ENCODE measurements at regions of chr11 and their contacts with region 1.

Region 1: DNA sequence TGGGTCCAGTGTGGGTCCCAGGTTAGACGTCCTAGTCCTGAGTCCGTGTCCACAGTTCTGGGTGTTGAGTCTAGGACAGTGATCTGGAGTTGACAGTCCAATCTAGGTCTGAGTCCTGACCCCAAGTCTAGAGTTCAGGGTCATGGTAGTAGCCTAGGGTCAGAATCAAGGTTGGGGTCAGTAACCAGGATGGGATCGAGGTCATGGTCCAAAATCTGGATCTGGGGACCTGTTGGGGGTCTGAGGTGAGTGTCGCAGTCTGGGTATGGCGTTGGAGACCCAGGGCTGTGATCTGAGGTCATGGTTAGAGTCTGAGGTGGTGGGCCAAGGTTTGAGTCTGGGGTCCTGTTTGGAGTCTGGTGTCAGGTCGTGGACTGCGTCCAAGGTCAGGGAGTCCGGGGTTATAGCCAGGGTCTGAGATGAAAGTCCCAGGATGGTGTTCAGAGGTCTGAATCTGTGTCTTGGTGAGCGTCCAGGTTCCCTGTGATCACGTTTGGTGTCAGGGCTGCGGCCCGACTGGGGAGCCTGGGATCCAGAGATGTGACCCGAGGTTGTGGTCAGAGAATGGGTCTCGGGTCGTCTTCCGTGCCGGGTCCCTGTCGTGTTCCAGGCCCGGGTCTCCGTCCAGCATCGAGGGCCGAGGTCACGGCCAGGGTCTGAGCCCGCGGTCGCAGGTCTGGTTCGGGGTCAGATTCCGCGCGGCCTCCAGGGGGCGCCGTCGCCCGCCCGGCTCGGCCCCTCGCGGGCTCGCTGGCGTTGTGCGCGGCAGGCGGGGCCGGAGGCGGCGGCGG is 445 bp upstream of the GRK2 start:
- DNase-seq: peak; percentile 89
- ATAC-seq: peak; percentile 69
- H3K4me3 ChIP-seq: no peak overlapping the region
- H3K4me3 Mint-ChIP-seq: peak overlapping the region; percentile 81
- H3K27ac ChIP-seq: peak overlapping the region; percentile 55 to 63
- H3K27ac Mint-ChIP-seq: peak overlapping the region; percentile 89
- H3K4me1 ChIP-seq: peaks cover 63 to 65% of the 10 kb centered on the region in 2 donors
- H3K4me1 Mint-ChIP-seq: peaks cover 66% of the 10 kb centered on the region
- H3K27me3 ChIP-seq: peaks cover 0 to 9% (median 2%) of the 10 kb centered on the region in 4 experiments
- H3K27me3 Mint-ChIP-seq: peaks cover 6% of the 10 kb centered on the region
- CTCF ChIP-seq: peak; percentile 69

Region 2: DNA sequence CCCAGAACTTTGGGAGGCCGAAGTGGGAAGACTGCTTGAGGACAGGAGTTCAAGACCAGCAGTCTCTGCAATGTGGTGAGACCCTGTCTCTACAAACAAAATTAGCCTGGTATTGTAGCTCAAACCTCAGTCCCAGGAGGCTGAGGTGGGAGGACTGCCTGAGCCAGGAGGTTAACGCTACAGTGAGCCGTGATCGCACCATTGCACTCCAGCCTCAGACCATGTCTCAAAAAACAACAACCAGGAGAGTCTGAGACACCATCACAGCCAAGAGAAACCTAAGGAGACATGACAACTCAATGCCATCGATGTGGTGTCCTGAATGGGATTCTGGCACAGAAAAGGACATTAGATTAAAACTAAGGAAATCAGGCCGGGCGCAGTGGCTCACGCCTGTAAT is 175.1 kb before region 1 on chr11:
- CTCF ChIA-PET with region 1: no interaction called
- POLR2A ChIA-PET with region 1: no interaction called
- intact Hi-C with region 1: no loop called
- DNase-seq: no peak
- ATAC-seq: no peak
- H3K4me3 ChIP-seq: no peak overlapping the region
- H3K4me3 Mint-ChIP-seq: no peak overlapping the region
- H3K27ac ChIP-seq: no peak overlapping the region
- H3K27ac Mint-ChIP-seq: no peak overlapping the region
- H3K4me1 ChIP-seq: no peaks in the 10 kb centered on the region
- H3K4me1 Mint-ChIP-seq: no peaks in the 10 kb centered on the region
- H3K27me3 ChIP-seq: no peaks in the 10 kb centered on the region
- H3K27me3 Mint-ChIP-seq: no peaks in the 10 kb centered on the region
- CTCF ChIP-seq: no peak

Region 3: DNA sequence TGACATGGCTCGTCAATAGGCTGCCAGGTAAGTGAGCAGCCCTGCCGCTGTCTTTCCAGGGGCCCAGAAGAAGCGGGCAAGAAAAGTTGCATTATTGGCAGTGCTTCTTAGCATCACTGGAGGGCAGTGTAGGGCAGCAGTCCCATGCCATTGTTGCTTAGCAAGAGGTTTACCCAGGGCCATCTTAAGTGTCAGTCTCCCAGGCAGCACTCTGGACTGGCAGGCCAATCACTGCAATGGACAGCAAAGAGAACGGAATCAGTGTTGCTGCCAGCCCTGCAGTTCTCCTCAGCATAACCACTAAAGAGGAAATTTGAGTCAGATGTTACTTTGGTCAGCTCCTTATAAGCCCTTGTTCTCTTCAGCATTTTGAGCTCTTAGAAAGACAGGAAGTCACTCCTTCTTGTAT is 13.0 kb before region 1 on chr11:
- CTCF ChIA-PET with region 1: interaction called, 10 read pairs
- POLR2A ChIA-PET with region 1: interaction called, 5 read pairs
- intact Hi-C with region 1: no loop called
- DNase-seq: peak; percentile 55
- ATAC-seq: peak; percentile 41
- H3K4me3 ChIP-seq: no peak overlapping the region
- H3K4me3 Mint-ChIP-seq: no peak overlapping the region
- H3K27ac ChIP-seq: no peak overlapping the region
- H3K27ac Mint-ChIP-seq: peak overlapping the region; percentile 67
- H3K4me1 ChIP-seq: no peaks in the 10 kb centered on the region
- H3K4me1 Mint-ChIP-seq: peaks cover 7% of the 10 kb centered on the region
- H3K27me3 ChIP-seq: no peaks in the 10 kb centered on the region
- H3K27me3 Mint-ChIP-seq: no peaks in the 10 kb centered on the region
- CTCF ChIP-seq: peak; percentile 57

Region 4: DNA sequence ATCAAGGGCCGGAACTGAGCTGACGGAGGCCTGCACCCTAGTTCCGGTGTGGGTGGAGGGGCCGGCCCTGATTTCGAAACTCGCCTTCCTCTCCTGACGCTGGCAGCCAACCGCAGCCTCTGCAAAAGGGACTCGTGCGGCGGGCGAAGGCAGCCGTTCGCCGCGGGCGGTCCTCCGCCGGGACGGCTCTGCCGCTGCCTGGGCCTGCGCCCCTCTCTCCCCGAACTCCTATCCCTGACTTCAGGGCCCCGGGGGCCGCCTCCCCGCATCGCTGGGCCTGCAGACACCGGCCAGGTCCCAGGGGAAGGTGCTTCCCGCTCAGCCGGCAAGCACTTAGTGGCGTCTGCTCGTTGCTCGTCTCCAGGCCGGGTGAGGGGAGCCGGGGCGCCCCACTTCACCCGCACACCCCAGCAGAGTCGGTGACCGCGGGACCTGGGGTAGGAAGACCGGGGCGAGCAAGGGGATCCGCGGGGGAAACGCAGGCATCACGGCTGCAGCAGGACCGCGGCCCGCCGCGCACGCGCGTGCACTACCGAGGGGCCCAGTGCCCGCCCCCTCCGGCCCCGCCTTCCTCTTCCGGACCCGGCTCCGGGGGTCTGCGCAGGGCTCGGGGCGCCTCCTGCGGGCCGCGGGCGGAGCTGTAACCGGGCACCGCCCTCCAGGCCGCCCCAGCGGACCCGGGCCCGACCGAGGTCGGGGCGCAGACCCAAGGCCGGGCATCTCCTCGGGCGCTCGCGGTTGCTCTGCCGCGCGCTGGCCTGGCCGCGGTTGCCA is 22.8 kb after region 1 on chr11:
- CTCF ChIA-PET with region 1: interaction called, 35 read pairs
- POLR2A ChIA-PET with region 1: interaction called, 131 read pairs
- intact Hi-C with region 1: loop called (anchors 1 kb)
- DNase-seq: peak; percentile 95
- ATAC-seq: peak; percentile 76
- H3K4me3 ChIP-seq: peak overlapping the region; percentile 31 to 86 (median 79)
- H3K4me3 Mint-ChIP-seq: peak overlapping the region; percentile 76
- H3K27ac ChIP-seq: peak overlapping the region; percentile 86 to 92
- H3K27ac Mint-ChIP-seq: peak overlapping the region; percentile 97
- H3K4me1 ChIP-seq: peaks cover 44 to 55% of the 10 kb centered on the region in 2 donors
- H3K4me1 Mint-ChIP-seq: peaks cover 45% of the 10 kb centered on the region
- H3K27me3 ChIP-seq: no peaks in the 10 kb centered on the region
- H3K27me3 Mint-ChIP-seq: no peaks in the 10 kb centered on the region
- CTCF ChIP-seq: peak; percentile 61

Region 5: DNA sequence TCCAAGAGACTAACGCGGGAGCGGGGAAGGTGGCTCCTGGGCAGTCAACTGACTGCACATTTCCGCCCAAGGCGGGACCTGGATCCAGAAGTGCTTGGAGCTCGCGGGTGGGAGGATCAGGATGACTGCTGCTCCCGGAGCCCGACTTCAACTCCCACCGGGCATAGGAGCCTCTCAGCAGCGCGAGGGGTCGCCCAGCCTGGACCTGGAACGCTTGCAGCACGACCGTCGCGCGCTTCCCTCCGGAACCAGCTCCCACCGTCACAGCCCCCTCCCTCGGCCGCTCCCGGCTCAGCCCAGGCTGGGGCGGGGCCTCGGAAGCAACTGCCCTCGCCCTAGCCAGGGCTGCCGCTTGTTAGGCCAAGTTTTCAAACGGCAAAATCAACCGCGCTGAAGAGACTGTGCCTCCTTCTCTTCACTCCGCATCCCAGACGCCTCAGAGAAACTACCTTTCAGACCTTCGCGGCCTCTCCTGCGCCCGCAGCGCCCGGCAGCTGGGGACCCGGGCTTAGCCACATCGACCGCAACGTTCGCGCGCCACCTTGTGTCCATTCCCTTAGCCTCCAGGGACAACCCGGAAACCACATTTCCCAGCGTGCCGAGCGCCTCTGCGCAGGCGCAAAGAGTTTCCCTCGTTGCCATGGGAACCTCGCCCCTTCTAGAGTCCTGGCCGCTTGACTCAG is 51.5 kb after region 1 on chr11:
- CTCF ChIA-PET with region 1: interaction called, 229 read pairs
- POLR2A ChIA-PET with region 1: interaction called, 22 read pairs
- intact Hi-C with region 1: loop called (anchors 1 kb)
- DNase-seq: peak; percentile 99
- ATAC-seq: peak; percentile 83
- H3K4me3 ChIP-seq: peak overlapping the region; percentile 77 to 92 (median 87)
- H3K4me3 Mint-ChIP-seq: peak overlapping the region; percentile 89
- H3K27ac ChIP-seq: peak overlapping the region; percentile 46 to 78
- H3K27ac Mint-ChIP-seq: peak overlapping the region; percentile 97
- H3K4me1 ChIP-seq: peaks cover 22 to 33% of the 10 kb centered on the region in 2 donors
- H3K4me1 Mint-ChIP-seq: peaks cover 21% of the 10 kb centered on the region
- H3K27me3 ChIP-seq: no peaks in the 10 kb centered on the region
- H3K27me3 Mint-ChIP-seq: no peaks in the 10 kb centered on the region
- CTCF ChIP-seq: peak; percentile 81

Region 6: DNA sequence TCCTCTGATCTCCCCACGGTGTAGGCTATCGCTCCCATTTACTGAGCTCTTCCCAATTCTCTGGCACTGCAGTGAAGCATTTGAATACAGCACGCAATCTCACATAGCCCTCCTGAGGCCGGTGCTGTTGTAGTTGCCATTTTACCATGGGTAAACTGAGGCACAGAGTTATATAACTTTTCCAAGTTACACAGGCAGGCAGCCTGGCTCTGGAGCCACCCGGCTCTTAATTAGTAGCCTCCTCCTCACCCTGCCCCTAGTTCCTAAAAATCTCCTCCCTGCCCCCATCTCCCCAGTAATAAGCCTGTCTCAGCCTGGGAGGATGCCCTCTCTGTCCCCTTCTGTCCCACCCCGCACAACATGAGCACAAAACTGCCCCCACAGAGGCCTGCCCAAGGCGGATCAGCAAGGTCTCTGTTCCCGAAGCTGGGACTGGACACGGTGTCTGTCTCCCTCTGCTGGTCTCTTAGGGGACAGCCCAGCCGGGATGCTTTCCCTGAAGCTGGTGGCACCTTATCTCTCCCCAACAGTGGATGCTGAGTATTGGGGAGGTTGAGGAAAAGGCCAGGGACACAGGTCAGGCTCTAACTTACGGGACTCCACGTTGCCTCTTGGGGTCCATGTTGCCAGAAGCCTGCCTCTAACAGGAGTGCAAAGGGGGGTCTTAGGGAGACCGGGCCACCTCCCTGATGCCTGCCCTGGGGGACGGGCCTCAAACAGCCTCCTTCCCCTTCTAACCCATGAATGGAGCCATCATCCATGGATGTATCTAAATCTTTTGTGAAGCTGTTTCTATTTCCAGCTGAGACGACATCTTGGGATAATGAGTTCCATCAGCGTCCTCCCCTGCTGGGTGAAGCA is 116.7 kb after region 1 on chr11:
- CTCF ChIA-PET with region 1: interaction called, 99 read pairs
- POLR2A ChIA-PET with region 1: interaction called, 7 read pairs
- intact Hi-C with region 1: loop called (anchors 1 kb)
- DNase-seq: peak; percentile 88
- ATAC-seq: peak; percentile 86
- H3K4me3 ChIP-seq: no peak overlapping the region
- H3K4me3 Mint-ChIP-seq: peak overlapping the region; percentile 84
- H3K27ac ChIP-seq: peak overlapping the region in 1 of 2 donors; percentile 88
- H3K27ac Mint-ChIP-seq: peak overlapping the region; percentile 92
- H3K4me1 ChIP-seq: peaks cover 22 to 33% of the 10 kb centered on the region in 2 donors
- H3K4me1 Mint-ChIP-seq: peaks cover 22% of the 10 kb centered on the region
- H3K27me3 ChIP-seq: no peaks in the 10 kb centered on the region
- H3K27me3 Mint-ChIP-seq: no peaks in the 10 kb centered on the region
- CTCF ChIP-seq: peak; percentile 96

Region 7: DNA sequence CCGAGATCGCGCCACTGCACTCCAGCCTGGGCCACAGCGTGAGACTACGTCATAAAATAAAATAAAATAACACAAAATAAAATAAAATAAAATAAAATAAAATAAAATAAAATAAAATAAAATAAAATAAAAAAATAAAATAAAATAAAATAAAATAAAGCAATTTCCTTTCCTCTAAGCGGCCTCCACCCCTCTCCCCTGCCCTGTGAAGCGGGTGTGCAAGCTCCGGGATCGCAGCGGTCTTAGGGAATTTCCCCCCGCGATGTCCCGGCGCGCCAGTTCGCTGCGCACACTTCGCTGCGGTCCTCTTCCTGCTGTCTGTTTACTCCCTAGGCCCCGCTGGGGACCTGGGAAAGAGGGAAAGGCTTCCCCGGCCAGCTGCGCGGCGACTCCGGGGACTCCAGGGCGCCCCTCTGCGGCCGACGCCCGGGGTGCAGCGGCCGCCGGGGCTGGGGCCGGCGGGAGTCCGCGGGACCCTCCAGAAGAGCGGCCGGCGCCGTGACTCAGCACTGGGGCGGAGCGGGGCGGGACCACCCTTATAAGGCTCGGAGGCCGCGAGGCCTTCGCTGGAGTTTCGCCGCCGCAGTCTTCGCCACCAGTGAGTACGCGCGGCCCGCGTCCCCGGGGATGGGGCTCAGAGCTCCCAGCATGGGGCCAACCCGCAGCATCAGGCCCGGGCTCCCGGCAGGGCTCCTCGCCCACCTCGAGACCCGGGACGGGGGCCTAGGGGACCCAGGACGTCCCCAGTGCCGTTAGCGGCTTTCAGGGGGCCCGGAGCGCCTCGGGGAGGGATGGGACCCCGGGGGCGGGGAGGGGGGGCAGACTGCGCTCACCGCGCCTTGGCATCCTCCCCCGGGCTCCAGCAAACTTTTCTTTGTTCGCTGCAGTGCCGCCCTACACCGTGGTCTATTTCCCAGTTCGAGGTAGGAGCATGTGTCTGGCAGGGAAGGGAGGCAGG is 317.7 kb after region 1 on chr11 and contains the start of gene GSTP1:
- CTCF ChIA-PET with region 1: interaction called, 3 read pairs
- POLR2A ChIA-PET with region 1: interaction called, 4 read pairs
- intact Hi-C with region 1: loop called (anchors 10 kb)
- DNase-seq: peak; percentile 86
- ATAC-seq: peak; percentile 71
- H3K4me3 ChIP-seq: peak within 1 kb of the TSS; percentile 34 to 69 (median 58)
- H3K4me3 Mint-ChIP-seq: peak within 1 kb of the TSS; percentile 93
- H3K27ac ChIP-seq: peak within 1 kb of the TSS; percentile 51 to 91
- H3K27ac Mint-ChIP-seq: peak within 1 kb of the TSS; percentile 100
- H3K4me1 ChIP-seq: peaks cover 67 to 73% of the 10 kb centered on the region in 2 donors
- H3K4me1 Mint-ChIP-seq: peaks cover 68% of the 10 kb centered on the region
- H3K27me3 ChIP-seq: peaks cover 0 to 4% (median 2%) of the 10 kb centered on the region in 4 experiments
- H3K27me3 Mint-ChIP-seq: peaks cover 5% of the 10 kb centered on the region
- CTCF ChIP-seq: peak; percentile 71
- total RNA-seq, gene GSTP1: 296 and 313 TPM in 2 replicates

Measured in B cell (primary cell).